CD8-positive, alpha-beta T cell (primary cell): ENCODE measurements at regions of chr13 and their contacts with region 1.

Region 1: GRCh38 chr13:32650705-32651311 is 64.6 kb downstream of the PDS5B start:
- DNase-seq: peak in 8 of 9 experiments; percentile 12 to 80 (median 56)
- ATAC-seq: peak; percentile 84
- H3K4me3 ChIP-seq: no peak overlapping the region
- H3K4me3 Mint-ChIP-seq: no peak overlapping the region
- H3K27ac ChIP-seq: no peak overlapping the region
- H3K27ac Mint-ChIP-seq: no peak overlapping the region
- H3K4me1 ChIP-seq: peaks cover 3% of the 10 kb centered on the region
- H3K4me1 Mint-ChIP-seq: peaks cover 37% of the 10 kb centered on the region
- H3K27me3 ChIP-seq: no peaks in the 10 kb centered on the region
- H3K27me3 Mint-ChIP-seq: no peaks in the 10 kb centered on the region
- CTCF ChIP-seq: peak; percentile 73

Region 2: DNA sequence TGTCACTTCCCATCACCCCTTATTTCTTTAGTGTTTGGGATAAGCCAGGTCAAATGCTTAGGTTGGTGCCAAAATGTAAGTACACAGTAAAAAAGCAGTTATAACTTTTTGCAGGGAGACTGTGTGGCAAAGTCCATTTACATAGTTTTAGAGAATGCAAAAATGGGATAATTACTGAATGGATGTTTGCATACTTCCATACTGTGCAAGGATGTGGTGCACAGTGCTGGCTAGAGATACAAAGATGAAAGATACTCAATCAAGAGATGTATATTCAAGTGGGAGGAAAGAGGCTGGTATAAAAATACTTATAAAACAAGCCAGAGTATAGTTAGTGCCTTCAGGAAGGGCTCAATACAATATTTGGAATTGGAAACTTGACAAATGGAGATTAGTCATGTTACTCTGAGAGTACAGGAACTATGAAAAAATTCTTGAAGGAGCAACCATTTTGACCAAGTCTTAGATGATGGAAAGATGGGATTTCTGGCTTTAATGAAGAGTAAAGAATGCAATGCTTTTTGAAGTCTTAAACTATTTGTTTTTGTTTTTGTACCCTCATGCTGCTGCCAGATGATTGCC is 56.6 kb before region 1 on chr13:
- CTCF ChIA-PET with region 1: interaction called, 28 read pairs
- POLR2A ChIA-PET with region 1: no interaction called
- intact Hi-C with region 1: no loop called
- DNase-seq: no peak
- ATAC-seq: no peak
- H3K4me3 ChIP-seq: no peak overlapping the region
- H3K4me3 Mint-ChIP-seq: no peak overlapping the region
- H3K27ac ChIP-seq: no peak overlapping the region
- H3K27ac Mint-ChIP-seq: no peak overlapping the region
- H3K4me1 ChIP-seq: peaks cover 19% of the 10 kb centered on the region
- H3K4me1 Mint-ChIP-seq: peaks cover 61% of the 10 kb centered on the region
- H3K27me3 ChIP-seq: no peaks in the 10 kb centered on the region
- H3K27me3 Mint-ChIP-seq: no peaks in the 10 kb centered on the region
- CTCF ChIP-seq: no peak

Region 3: GRCh38 chr13:32669030-32669646 is 18.3 kb after region 1 on chr13:
- CTCF ChIA-PET with region 1: interaction called, 24 read pairs
- POLR2A ChIA-PET with region 1: no interaction called
- intact Hi-C with region 1: no loop called
- DNase-seq: peak in 3 of 9 experiments; percentile 7 to 70 (median 59)
- ATAC-seq: peak; percentile 76
- H3K4me3 ChIP-seq: no peak overlapping the region
- H3K4me3 Mint-ChIP-seq: no peak overlapping the region
- H3K27ac ChIP-seq: no peak overlapping the region
- H3K27ac Mint-ChIP-seq: no peak overlapping the region
- H3K4me1 ChIP-seq: no peaks in the 10 kb centered on the region
- H3K4me1 Mint-ChIP-seq: peaks cover 14% of the 10 kb centered on the region
- H3K27me3 ChIP-seq: no peaks in the 10 kb centered on the region
- H3K27me3 Mint-ChIP-seq: no peaks in the 10 kb centered on the region
- CTCF ChIP-seq: peak; percentile 60

Region 4: GRCh38 chr13:33017323-33017929 is 366.6 kb after region 1 on chr13:
- CTCF ChIA-PET with region 1: no interaction called
- POLR2A ChIA-PET with region 1: no interaction called
- intact Hi-C with region 1: loop called in 1 of 2 experiments (anchors 5 kb)
- DNase-seq: peak in 4 of 9 experiments; percentile 14 to 69 (median 44)
- ATAC-seq: peak; percentile 87
- H3K4me3 ChIP-seq: peak overlapping the region; percentile 28 to 42
- H3K4me3 Mint-ChIP-seq: peak overlapping the region; percentile 76
- H3K27ac ChIP-seq: no peak overlapping the region
- H3K27ac Mint-ChIP-seq: no peak overlapping the region
- H3K4me1 ChIP-seq: no peaks in the 10 kb centered on the region
- H3K4me1 Mint-ChIP-seq: peaks cover 12% of the 10 kb centered on the region
- H3K27me3 ChIP-seq: peaks cover 4 to 14% of the 10 kb centered on the region in 2 experiments
- H3K27me3 Mint-ChIP-seq: peaks cover 65% of the 10 kb centered on the region
- CTCF ChIP-seq: peak; percentile 35